CD14-positive monocyte (primary cell): ENCODE measurements at regions of chr20 and their contacts with region 1.

Region 1: DNA sequence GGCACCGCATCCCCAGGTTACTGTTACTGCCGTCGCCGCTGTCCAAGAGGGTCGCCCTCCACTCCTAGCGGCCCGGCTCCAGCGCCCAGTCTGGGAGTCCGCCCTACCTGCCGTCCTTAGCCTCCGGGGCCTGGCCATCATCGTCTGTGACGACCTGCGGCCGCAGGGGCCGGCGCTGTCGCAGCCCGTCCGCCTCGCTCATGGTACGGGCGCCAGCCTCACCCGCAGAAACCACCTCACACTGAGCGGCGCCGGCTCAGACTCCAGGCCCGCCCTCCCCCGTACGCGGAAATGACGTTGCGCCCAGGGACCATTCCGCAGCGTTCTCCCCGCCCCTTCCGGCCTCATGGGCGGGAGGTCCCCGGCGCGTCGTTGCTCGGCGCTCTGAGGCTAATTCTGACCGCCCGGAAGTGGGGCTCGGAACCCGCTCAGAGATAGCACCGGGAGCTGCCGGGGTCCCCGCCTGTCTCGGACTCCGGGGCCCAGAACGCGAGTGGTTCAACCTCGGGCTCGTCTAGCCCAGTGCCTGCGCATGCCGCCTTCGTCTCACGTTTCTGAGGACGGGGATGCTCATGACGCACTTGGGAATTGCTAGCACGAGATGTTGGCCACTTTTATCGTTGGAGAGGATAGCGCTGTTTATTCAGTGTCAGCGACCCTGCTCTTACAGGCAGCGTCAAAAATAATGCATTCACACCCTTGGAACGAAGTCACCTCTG is at the start of gene APMAP:
- DNase-seq: peak; percentile 88 to 94 (median 94)
- H3K4me3 ChIP-seq: peak within 1 kb of the TSS; percentile 55 to 89 (median 85)
- H3K4me3 Mint-ChIP-seq: peak within 1 kb of the TSS; percentile 96 to 97
- H3K27ac ChIP-seq: peak within 1 kb of the TSS; percentile 87 to 98
- H3K27ac Mint-ChIP-seq: peak within 1 kb of the TSS; percentile 94 to 98 (median 97)
- H3K4me1 ChIP-seq: peaks cover 46 to 63% of the 10 kb centered on the region in 2 donors
- H3K4me1 Mint-ChIP-seq: peaks cover 69% of the 10 kb centered on the region
- H3K27me3 ChIP-seq: no peaks in the 10 kb centered on the region
- H3K27me3 Mint-ChIP-seq: peaks cover 2 to 5% (median 5%) of the 10 kb centered on the region in 3 donors
- CTCF ChIP-seq: no peak
- polyA plus RNA-seq, gene APMAP: 26.9 to 74.0 (median 73.2) TPM

Region 2: DNA sequence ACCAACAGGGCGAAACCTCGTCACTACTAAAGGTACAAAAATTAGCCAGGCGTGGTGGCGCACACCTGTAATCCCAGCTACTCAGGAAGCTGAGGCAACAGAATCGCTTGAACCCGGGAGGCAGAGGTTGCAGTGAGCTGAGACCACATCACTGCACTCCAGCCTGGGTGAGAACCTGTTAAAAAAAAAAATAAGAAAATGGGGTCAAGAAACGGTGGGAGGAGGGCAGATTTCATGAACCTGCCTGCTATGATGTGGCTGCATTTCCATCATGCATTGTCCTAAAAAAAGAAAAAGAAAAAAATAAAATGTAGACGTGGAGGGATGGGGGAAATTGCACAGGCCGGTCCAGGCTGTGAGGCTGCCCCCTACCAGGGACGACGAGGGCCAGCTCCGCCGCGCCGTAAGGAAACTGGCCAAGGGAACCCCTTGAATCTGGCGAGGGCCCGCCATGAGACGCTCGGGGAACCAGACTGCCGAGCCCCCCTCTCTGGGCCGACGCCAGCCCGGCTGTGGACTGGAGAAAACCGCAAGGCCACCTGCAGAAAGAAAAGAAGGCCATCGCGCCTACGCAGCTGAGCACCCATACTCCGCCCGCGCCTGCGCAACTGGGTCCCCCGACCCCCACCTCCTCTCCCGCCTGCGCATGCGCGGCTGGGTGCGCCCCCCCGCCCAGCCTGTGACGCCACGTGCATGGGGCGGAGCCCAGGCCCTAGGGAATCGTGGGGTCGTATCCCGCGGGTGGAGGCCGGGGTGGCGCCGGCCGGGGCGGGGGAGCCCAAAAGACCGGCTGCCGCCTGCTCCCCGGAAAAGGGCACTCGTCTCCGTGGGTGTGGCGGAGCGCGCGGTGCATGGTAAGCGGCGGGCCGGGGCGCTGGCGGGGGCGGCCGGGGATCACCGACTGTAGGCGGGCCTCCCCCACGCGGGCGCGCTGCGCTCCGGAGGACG is 202.6 kb after region 1 on chr20 and contains the start of gene ENTPD6:
- intact Hi-C with region 1: loop called (anchors 10 kb)
- DNase-seq: peak; percentile 79 to 83 (median 81)
- H3K4me3 ChIP-seq: peak within 1 kb of the TSS; percentile 88 to 98 (median 96)
- H3K4me3 Mint-ChIP-seq: peak within 1 kb of the TSS; percentile 90 to 97
- H3K27ac ChIP-seq: peak within 1 kb of the TSS; percentile 61 to 87
- H3K27ac Mint-ChIP-seq: peak within 1 kb of the TSS; percentile 66 to 89 (median 81)
- H3K4me1 ChIP-seq: peaks cover 18 to 29% of the 10 kb centered on the region in 2 donors
- H3K4me1 Mint-ChIP-seq: peaks cover 34% of the 10 kb centered on the region
- H3K27me3 ChIP-seq: no peaks in the 10 kb centered on the region
- H3K27me3 Mint-ChIP-seq: peaks cover 3 to 13% (median 8%) of the 10 kb centered on the region in 3 donors
- CTCF ChIP-seq: no peak
- polyA plus RNA-seq, gene ENTPD6: 36.2 to 120 (median 47.0) TPM

Region 3: DNA sequence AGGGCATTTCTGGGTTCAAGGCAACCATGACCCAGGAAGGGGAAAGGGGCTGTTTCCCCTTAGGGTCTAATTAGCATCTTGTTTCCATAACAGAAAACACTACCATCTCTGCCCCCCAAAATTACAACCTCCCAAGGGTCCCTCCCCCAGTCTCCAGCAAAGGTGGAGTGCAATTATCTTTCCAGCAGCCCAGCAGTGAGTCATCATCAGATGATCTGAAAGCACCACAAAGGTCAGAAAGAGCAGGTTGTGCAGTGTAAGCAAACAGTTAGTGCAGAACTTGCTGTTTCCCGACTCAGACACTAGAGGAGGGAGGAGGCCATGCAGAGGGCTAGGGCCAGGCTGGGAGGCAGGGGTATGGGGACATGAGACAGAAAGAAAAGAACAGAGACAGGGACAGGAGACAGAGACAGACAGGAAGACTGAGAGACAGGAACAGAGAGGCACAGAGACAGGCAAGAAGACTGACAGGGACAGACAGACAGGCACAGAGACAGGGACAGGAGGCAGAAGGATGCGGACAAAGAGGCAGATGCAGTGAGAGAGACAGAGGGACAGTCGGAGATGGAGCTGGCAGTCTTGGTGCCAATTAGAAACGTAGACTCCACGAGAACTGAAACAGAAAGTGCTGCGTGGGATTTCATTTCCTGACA is 317.7 kb after region 1 on chr20:
- intact Hi-C with region 1: loop called (anchors 2 to 10 kb)
- DNase-seq: peak; percentile 84 to 92 (median 85)
- H3K4me3 ChIP-seq: peak overlapping the region; percentile 14 to 64 (median 31)
- H3K4me3 Mint-ChIP-seq: peak overlapping the region; percentile 81 to 96
- H3K27ac ChIP-seq: peak overlapping the region; percentile 82 to 92
- H3K27ac Mint-ChIP-seq: peak overlapping the region; percentile 92 to 100 (median 96)
- H3K4me1 ChIP-seq: peaks cover 25 to 28% of the 10 kb centered on the region in 2 donors
- H3K4me1 Mint-ChIP-seq: peaks cover 29% of the 10 kb centered on the region
- H3K27me3 ChIP-seq: no peaks in the 10 kb centered on the region
- H3K27me3 Mint-ChIP-seq: peaks cover 0 to 2% (median 0%) of the 10 kb centered on the region in 3 donors
- CTCF ChIP-seq: peak; percentile 43

Region 4: DNA sequence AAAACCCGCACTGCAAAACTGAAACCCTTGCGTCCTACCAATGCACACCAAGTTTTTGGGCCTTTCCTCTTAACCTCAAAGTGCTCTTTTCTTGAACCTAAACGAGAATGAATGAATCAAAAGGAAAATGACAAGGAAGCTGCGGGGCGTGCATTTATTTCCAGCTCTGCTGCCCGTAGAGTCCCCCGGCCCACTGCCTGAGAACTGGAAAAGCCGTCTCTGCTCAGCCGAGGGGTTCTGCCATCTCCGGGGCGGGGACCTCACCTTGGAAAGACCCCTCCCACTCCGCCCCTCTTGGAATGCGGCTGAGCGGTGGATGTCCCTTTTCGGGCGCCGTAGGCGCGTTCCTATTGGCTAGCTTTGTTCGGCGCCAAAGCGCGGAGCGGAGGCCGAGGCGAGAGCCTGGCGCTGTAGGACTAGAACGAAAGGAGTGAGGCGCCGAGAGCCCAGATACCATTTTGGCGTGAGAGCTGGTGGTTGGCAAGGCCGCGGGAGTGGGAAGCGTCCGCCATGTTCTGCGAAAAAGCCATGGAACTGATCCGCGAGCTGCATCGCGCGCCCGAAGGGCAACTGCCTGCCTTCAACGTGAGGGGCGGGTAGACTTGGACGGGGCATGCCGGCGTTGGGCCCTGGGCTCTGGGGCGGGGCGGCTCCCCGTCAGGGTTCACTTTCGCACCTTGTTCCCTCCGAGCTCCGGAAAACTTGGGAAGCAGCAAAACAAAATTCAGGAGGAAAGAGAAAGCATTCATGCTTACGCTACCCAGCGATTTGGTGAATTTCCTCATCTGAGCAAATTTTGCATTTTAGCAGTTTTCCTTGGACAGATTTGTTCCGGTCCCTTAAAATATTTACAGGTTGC is 414.9 kb after region 1 on chr20 and contains the start of gene GINS1:
- intact Hi-C with region 1: loop called in 1 of 2 experiments (anchors 10 kb)
- DNase-seq: peak; percentile 58 to 67 (median 60)
- H3K4me3 ChIP-seq: peak within 1 kb of the TSS; percentile 61 to 98 (median 65)
- H3K4me3 Mint-ChIP-seq: peak within 1 kb of the TSS; percentile 93 to 94
- H3K27ac ChIP-seq: peak within 1 kb of the TSS; percentile 31 to 85
- H3K27ac Mint-ChIP-seq: peak within 1 kb of the TSS; percentile 41 to 86 (median 79)
- H3K4me1 ChIP-seq: peaks cover 10 to 19% of the 10 kb centered on the region in 2 donors
- H3K4me1 Mint-ChIP-seq: peaks cover 21% of the 10 kb centered on the region
- H3K27me3 ChIP-seq: no peaks in the 10 kb centered on the region
- H3K27me3 Mint-ChIP-seq: peaks cover 0 to 3% (median 0%) of the 10 kb centered on the region in 3 donors
- CTCF ChIP-seq: no peak
- polyA plus RNA-seq, gene GINS1: 0.16 to 0.48 (median 0.28) TPM

Region 5: DNA sequence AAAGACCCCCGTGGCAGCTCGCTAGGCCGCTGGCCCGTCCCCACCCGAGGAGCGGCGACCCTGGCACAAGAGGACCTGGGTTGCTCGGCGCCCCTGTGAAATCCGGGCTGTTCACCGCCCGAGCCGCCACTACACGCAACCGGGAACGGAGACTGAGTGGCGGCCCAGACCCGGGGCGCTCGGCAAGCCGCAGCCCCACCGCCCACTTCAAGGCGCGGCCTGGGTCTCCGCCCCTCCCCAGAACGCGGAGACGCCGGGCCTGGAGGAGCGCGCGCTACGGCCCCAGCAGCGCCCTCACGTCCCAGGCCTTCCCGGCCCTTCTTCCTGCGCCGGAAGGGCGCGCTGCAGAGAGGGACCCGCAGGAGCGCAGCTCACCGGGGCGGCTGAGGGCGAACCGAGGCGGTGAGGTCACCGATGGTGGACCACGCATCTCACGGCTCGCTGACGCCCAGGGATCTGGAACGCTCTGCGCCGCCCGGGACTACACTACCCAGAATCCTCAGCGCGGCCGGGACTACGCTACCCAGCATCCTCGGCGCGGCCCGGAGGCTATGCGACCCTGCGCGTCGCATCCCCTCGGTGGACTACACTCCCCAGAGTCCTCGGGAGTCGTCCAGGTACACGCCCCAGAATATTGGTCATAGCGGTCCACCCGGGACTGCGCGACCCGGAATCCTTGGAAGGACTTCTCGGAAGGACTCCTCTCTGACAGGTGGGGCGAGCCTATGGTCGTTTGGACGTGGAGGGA is 703.9 kb after region 1 on chr20 and contains the start of gene ZNF337:
- intact Hi-C with region 1: loop called in 1 of 2 experiments (anchors 5 kb)
- DNase-seq: peak; percentile 80 to 85 (median 84)
- H3K4me3 ChIP-seq: peak within 1 kb of the TSS; percentile 49 to 94 (median 78)
- H3K4me3 Mint-ChIP-seq: peak within 1 kb of the TSS; percentile 91 to 93
- H3K27ac ChIP-seq: peak within 1 kb of the TSS in 1 of 2 donors; percentile 77
- H3K27ac Mint-ChIP-seq: peak within 1 kb of the TSS; percentile 57 to 88 (median 67)
- H3K4me1 ChIP-seq: peaks cover 10 to 15% of the 10 kb centered on the region in 2 donors
- H3K4me1 Mint-ChIP-seq: peaks cover 14% of the 10 kb centered on the region
- H3K27me3 ChIP-seq: no peaks in the 10 kb centered on the region
- H3K27me3 Mint-ChIP-seq: peaks cover 0 to 3% (median 0%) of the 10 kb centered on the region in 3 donors
- CTCF ChIP-seq: no peak
- polyA plus RNA-seq, gene ZNF337: 2.1 to 12.0 (median 3.0) TPM